ENCODE measurements at regions of chr22 and their contacts with region 1.

Region 1: DNA sequence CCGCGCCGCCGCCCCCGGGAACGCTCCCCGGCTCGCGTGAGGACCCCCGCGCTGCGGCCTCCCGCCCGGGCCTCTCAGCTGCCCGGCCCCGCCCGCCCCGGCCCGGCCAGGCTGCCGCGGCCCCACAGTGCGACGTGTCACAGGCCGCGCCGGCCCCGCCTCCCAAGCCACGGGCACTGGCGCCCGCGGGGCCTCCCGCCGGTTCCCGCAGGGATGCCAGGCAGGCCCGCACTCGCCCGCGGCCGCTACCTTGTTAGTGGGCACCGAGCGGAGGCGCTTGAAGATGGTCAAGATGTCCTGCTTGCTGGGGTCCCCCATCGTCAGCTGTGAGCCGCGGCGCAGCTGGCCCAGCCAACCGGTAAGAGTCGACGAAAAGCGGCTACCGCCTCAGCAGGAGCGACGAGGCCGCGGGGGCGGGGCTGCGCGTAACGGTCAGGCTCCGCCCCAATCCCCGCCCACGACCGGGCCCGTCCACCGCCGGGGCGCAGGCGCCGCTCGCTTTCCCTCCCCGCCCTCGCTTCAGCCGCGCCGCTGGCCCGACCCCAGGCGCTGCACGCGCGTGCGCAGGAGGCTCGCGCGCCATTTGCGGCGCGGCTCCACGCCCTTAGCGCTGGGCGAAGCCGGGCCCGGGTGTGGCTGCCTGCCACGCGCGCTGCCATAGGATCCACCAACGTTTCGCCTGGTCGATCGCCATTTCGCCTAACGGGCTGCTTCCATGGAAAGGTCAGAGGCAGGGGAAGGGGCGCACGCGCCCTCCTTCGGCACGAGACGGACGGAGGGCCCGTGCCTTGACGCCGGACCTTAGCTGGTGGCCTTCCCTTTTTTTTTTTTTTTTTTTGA is at the start of gene ARFGAP3:
- DNase-seq: peak; percentile 94
- H3K4me3 Mint-ChIP-seq: peak within 1 kb of the TSS; percentile 93
- H3K27ac Mint-ChIP-seq: peak within 1 kb of the TSS; percentile 92
- H3K4me1 Mint-ChIP-seq: peaks cover 7% of the 10 kb centered on the region
- H3K27me3 Mint-ChIP-seq: no peaks in the 10 kb centered on the region
- total RNA-seq, gene ARFGAP3: 38.0 and 42.3 TPM in 2 replicates

Region 2: GRCh38 chr22:42649246-42650099 is 207.6 kb before region 1 on chr22 and contains the start of gene CYB5R3:
- intact Hi-C with region 1: loop called (anchors 1 kb)
- DNase-seq: peak; percentile 68
- H3K4me3 Mint-ChIP-seq: peak within 1 kb of the TSS; percentile 97
- H3K27ac Mint-ChIP-seq: peak within 1 kb of the TSS; percentile 98
- H3K4me1 Mint-ChIP-seq: peaks cover 15% of the 10 kb centered on the region
- H3K27me3 Mint-ChIP-seq: no peaks in the 10 kb centered on the region
- total RNA-seq, gene CYB5R3: 69.8 and 75.1 TPM in 2 replicates

Region 3: GRCh38 chr22:42794551-42795510 is 62.3 kb before region 1 on chr22:
- intact Hi-C with region 1: no loop called
- DNase-seq: no peak
- H3K4me3 Mint-ChIP-seq: no peak overlapping the region
- H3K27ac Mint-ChIP-seq: no peak overlapping the region
- H3K4me1 Mint-ChIP-seq: peaks cover 13% of the 10 kb centered on the region
- H3K27me3 Mint-ChIP-seq: no peaks in the 10 kb centered on the region

Region 4: GRCh38 chr22:42868751-42869251 is 11.7 kb after region 1 on chr22:
- intact Hi-C with region 1: no loop called
- DNase-seq: no peak
- H3K4me3 Mint-ChIP-seq: no peak overlapping the region
- H3K27ac Mint-ChIP-seq: no peak overlapping the region
- H3K4me1 Mint-ChIP-seq: peaks cover 1% of the 10 kb centered on the region
- H3K27me3 Mint-ChIP-seq: no peaks in the 10 kb centered on the region

Region 5: GRCh38 chr22:42895087-42895486 is 38.0 kb after region 1 on chr22:
- intact Hi-C with region 1: loop called (anchors 2 kb)
- DNase-seq: peak; percentile 17
- H3K4me3 Mint-ChIP-seq: peak overlapping the region; percentile 50
- H3K27ac Mint-ChIP-seq: peak overlapping the region; percentile 86
- H3K4me1 Mint-ChIP-seq: peaks cover 31% of the 10 kb centered on the region
- H3K27me3 Mint-ChIP-seq: no peaks in the 10 kb centered on the region

Region 6: GRCh38 chr22:43014869-43015676 is 158.0 kb after region 1 on chr22 and contains the start of gene PACSIN2:
- intact Hi-C with region 1: loop called (anchors 1 kb)
- DNase-seq: peak; percentile 99
- H3K4me3 Mint-ChIP-seq: peak within 1 kb of the TSS; percentile 92
- H3K27ac Mint-ChIP-seq: peak within 1 kb of the TSS; percentile 79
- H3K4me1 Mint-ChIP-seq: peaks cover 22% of the 10 kb centered on the region
- H3K27me3 Mint-ChIP-seq: peaks cover 9% of the 10 kb centered on the region
- total RNA-seq, gene PACSIN2: 30.5 and 31.7 TPM in 2 replicates